ENCODE measurements at regions of chr16 and their contacts with region 1.

Region 1: GRCh38 chr16:89785523-89786155 is 30.8 kb downstream of the FANCA start:
- DNase-seq: peak; percentile 48 to 85 (median 79)
- H3K4me3 ChIP-seq: no peak overlapping the region
- H3K4me3 Mint-ChIP-seq: peak overlapping the region; percentile 14 to 82 (median 63)
- H3K27ac ChIP-seq: peak overlapping the region; percentile 49
- H3K27ac Mint-ChIP-seq: peak overlapping the region; percentile 80 to 100 (median 98)
- H3K4me1 ChIP-seq: peaks cover 41% of the 10 kb centered on the region
- H3K4me1 Mint-ChIP-seq: peaks cover 29 to 40% (median 35%) of the 10 kb centered on the region in 3 donors
- H3K27me3 ChIP-seq: no peaks in the 10 kb centered on the region
- H3K27me3 Mint-ChIP-seq: peaks cover 0 to 5% of the 10 kb centered on the region in 2 donors

Region 2: DNA sequence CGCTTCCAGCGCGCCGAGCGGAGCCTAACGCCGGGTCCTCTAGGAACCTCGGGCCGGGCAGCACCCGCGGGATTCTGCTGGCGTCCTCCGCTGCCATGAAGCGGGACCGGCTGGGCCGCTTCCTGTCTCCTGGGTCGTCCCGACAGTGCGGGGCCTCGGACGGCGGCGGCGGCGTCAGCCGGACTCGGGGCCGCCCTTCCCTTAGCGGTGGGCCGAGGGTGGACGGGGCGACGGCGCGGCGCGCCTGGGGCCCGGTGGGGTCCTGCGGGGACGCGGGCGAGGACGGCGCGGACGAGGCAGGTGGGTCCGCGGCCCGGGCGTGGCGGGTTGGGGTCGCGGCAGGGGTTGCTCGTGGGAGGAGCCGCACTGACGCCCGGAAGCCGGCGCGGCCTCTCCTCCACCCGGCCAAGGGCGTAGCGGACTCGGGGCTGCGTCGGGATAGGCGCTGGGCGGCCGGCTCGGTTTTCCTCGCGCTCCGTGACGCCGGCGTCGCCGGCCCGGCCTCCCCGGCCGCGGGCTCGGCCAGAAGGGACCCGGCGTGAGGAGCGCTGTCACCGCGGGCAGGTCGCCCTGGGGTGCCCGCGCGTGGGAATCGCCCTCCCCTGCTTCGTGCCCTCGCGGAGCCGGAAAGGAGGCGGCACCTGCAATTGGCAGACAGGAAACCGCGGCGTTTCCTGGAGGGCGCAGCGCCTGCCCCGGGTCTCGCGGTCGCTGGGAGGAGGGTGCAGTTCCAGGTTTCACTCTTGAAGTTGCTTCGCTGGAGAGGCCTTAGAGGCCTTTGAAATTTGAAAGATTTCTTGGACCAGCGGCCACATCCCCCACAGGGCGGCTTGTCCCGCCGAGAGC is 63.9 kb before region 1 on chr16:
- CTCF ChIA-PET with region 1: interaction called, 12 read pairs
- POLR2A ChIA-PET with region 1: interaction called, 19 read pairs
- DNase-seq: peak; percentile 88 to 94 (median 93)
- H3K4me3 ChIP-seq: peak overlapping the region; percentile 98
- H3K4me3 Mint-ChIP-seq: peak overlapping the region; percentile 91 to 99 (median 97)
- H3K27ac ChIP-seq: peak overlapping the region; percentile 92
- H3K27ac Mint-ChIP-seq: peak overlapping the region; percentile 98 to 100 (median 99)
- H3K4me1 ChIP-seq: peaks cover 41% of the 10 kb centered on the region
- H3K4me1 Mint-ChIP-seq: peaks cover 17 to 38% (median 28%) of the 10 kb centered on the region in 3 donors
- H3K27me3 ChIP-seq: no peaks in the 10 kb centered on the region
- H3K27me3 Mint-ChIP-seq: peaks cover 0 to 6% of the 10 kb centered on the region in 2 donors

Region 3: GRCh38 chr16:89737341-89738071 is 48.1 kb before region 1 on chr16:
- CTCF ChIA-PET with region 1: no interaction called
- POLR2A ChIA-PET with region 1: interaction called, 10 read pairs
- DNase-seq: peak; percentile 24 to 73 (median 71)
- H3K4me3 ChIP-seq: no peak overlapping the region
- H3K4me3 Mint-ChIP-seq: peak overlapping the region; percentile 19 to 80 (median 63)
- H3K27ac ChIP-seq: no peak overlapping the region
- H3K27ac Mint-ChIP-seq: peak overlapping the region; percentile 23 to 94 (median 78)
- H3K4me1 ChIP-seq: peaks cover 40% of the 10 kb centered on the region
- H3K4me1 Mint-ChIP-seq: peaks cover 41 to 71% (median 51%) of the 10 kb centered on the region in 3 donors
- H3K27me3 ChIP-seq: no peaks in the 10 kb centered on the region
- H3K27me3 Mint-ChIP-seq: no peaks in the 10 kb centered on the region

Region 4: DNA sequence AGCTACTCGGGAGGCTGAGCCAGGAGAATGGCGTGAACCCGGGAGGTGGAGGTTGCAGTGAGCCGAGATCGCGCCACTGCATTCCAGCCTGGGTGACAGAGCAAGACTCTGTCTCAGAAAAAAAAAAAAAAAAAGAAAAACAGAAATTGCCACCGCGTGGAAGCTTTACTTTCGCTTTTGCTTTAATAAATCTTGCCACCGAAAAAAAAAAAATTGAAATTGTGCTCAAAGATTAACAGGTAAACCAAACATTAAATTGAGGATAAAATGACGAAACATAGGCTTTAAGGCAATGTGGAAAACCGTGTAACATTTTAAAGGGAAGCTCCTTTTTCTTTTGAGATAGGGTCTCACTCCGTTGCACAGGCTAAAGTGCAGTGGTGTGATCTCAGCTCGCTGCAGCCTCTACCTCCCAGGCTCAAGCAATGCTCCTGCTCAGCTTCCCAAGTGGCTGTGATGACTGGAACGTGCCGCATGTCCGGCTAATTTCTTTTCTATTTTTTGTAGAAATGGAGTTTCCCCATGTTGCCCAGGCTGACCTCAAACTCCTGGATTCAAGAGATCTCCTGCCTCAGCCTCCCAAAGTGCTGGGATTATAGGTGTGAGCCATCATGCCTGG is 24.2 kb before region 1 on chr16:
- CTCF ChIA-PET with region 1: interaction called, 4 read pairs
- POLR2A ChIA-PET with region 1: interaction called, 10 read pairs
- DNase-seq: peak in 1 of 5 donors; percentile 41
- H3K4me3 ChIP-seq: peak overlapping the region; percentile 52
- H3K4me3 Mint-ChIP-seq: peak overlapping the region; percentile 85 to 94 (median 90)
- H3K27ac ChIP-seq: peak overlapping the region; percentile 32
- H3K27ac Mint-ChIP-seq: peak overlapping the region; percentile 92 to 99 (median 96)
- H3K4me1 ChIP-seq: peaks cover 31% of the 10 kb centered on the region
- H3K4me1 Mint-ChIP-seq: peaks cover 37 to 66% (median 53%) of the 10 kb centered on the region in 3 donors
- H3K27me3 ChIP-seq: no peaks in the 10 kb centered on the region
- H3K27me3 Mint-ChIP-seq: no peaks in the 10 kb centered on the region

Region 5: DNA sequence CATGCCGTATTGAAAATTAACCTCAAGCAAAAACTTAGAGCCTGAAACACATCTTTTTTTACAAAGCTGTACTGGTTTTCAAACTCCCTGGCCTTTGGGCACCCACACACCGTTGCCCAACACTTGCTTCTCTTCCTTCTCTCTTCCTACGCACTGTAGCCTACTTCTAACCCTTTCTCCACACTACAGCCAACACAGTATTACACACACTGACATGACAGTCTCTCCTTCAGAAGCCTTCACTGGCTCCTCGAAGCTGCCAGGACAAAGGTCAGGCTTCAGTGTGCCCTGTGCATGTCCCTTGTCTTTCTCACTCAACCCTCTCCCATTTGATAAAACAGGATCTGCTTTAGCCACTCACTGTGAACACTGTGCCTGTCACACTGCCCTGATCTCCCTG is 22.8 kb after region 1 on chr16:
- CTCF ChIA-PET with region 1: no interaction called
- POLR2A ChIA-PET with region 1: no interaction called
- DNase-seq: no peak
- H3K4me3 ChIP-seq: no peak overlapping the region
- H3K4me3 Mint-ChIP-seq: no peak overlapping the region
- H3K27ac ChIP-seq: no peak overlapping the region
- H3K27ac Mint-ChIP-seq: no peak overlapping the region
- H3K4me1 ChIP-seq: no peaks in the 10 kb centered on the region
- H3K4me1 Mint-ChIP-seq: no peaks in the 10 kb centered on the region
- H3K27me3 ChIP-seq: no peaks in the 10 kb centered on the region
- H3K27me3 Mint-ChIP-seq: no peaks in the 10 kb centered on the region

Region 6: DNA sequence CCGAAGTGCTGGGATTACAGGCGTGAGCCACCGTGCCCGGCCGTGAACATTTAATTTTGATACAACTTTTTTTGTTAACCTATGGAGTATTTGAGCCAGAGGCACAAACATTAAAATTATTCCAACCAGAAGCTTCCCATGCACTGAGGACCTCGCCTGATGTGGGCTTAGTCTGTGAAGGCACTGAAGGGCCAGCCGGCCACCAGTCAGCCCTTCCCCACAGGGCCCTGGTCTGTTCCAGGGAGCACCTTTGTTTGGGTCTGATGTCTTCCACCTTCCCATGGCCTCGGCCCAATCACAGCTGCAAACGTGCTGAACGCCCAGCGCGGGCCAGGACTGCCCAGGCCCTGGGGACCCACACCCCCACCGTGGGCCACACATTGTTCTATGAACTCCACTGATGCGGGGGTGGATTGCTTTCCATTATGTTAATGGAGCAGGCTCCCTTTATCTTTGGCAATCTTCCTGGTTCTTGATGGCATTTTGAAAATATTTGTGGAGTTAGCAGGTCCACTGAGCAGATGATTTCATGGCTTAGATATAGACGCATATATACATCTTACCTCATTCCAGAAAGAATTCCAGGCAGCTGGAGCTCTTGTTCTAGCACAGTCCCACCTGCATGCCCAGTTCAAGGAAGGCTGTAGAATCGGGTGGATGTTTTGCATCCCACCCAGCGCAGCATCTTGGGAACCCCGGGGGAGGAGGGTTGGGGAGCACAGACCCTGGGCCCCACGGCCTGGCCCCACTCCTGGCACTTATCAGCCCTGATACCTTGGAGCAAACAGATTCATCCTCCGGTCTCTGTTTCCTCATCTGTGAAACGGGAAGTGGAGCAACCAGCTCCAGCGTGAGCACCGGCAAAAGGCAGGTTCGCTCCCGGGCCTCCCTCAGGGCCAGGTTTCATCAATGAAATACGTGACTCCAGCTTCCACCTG is 57.1 kb after region 1 on chr16:
- CTCF ChIA-PET with region 1: no interaction called
- POLR2A ChIA-PET with region 1: no interaction called
- DNase-seq: no peak
- H3K4me3 ChIP-seq: no peak overlapping the region
- H3K4me3 Mint-ChIP-seq: peak overlapping the region in 1 of 7 donors; percentile 31
- H3K27ac ChIP-seq: no peak overlapping the region
- H3K27ac Mint-ChIP-seq: peak overlapping the region in 1 of 8 donors; percentile 60
- H3K4me1 ChIP-seq: peaks cover 30% of the 10 kb centered on the region
- H3K4me1 Mint-ChIP-seq: peaks cover 24 to 44% (median 30%) of the 10 kb centered on the region in 3 donors
- H3K27me3 ChIP-seq: no peaks in the 10 kb centered on the region
- H3K27me3 Mint-ChIP-seq: no peaks in the 10 kb centered on the region

Region 7: DNA sequence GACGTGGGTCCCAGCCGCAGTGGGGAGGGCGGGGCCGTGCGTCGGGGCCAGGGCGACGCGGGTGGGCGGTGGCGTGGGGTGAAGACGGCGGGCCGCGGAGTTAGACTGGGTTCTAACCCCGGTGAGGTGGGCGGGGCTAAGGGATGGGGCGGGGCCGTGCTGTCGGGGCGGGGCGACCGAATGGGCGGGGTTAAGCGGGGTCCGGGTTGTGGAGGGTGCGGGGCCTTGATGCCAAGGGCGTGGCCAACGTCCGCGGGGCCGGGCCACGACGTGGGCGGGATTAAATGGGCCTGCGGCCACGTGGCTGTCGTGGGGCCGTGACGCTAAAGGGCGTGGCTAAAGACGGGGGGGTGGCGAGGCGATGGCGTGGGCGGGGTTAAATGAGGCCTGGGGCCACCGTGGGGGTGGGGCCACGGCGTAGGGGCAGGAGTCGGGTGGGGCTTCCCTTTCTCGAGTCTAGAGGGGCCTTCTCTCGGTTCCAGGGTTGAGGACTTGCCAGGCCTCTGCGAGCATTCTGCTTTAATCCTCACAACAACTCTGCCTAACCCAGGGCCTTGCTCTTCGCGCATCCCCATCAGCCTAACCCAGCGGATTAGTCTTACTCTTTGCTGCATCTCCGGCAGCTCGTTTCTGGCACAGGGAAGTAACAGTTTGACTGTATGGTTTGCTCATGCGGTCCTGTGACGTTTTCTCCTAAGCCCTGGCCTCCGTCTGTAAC is 88.5 kb after region 1 on chr16:
- CTCF ChIA-PET with region 1: no interaction called
- POLR2A ChIA-PET with region 1: interaction called, 13 read pairs
- DNase-seq: peak; percentile 90 to 95 (median 94)
- H3K4me3 ChIP-seq: peak overlapping the region; percentile 82
- H3K4me3 Mint-ChIP-seq: peak overlapping the region; percentile 90 to 97 (median 93)
- H3K27ac ChIP-seq: peak overlapping the region; percentile 98
- H3K27ac Mint-ChIP-seq: peak overlapping the region; percentile 98 to 100 (median 98)
- H3K4me1 ChIP-seq: peaks cover 21% of the 10 kb centered on the region
- H3K4me1 Mint-ChIP-seq: peaks cover 18 to 28% (median 21%) of the 10 kb centered on the region in 3 donors
- H3K27me3 ChIP-seq: no peaks in the 10 kb centered on the region
- H3K27me3 Mint-ChIP-seq: no peaks in the 10 kb centered on the region

Measured in CD8-positive, alpha-beta memory T cell (primary cell).